ENCODE measurements at regions of chrX and their contacts with region 1.

Region 1: DNA sequence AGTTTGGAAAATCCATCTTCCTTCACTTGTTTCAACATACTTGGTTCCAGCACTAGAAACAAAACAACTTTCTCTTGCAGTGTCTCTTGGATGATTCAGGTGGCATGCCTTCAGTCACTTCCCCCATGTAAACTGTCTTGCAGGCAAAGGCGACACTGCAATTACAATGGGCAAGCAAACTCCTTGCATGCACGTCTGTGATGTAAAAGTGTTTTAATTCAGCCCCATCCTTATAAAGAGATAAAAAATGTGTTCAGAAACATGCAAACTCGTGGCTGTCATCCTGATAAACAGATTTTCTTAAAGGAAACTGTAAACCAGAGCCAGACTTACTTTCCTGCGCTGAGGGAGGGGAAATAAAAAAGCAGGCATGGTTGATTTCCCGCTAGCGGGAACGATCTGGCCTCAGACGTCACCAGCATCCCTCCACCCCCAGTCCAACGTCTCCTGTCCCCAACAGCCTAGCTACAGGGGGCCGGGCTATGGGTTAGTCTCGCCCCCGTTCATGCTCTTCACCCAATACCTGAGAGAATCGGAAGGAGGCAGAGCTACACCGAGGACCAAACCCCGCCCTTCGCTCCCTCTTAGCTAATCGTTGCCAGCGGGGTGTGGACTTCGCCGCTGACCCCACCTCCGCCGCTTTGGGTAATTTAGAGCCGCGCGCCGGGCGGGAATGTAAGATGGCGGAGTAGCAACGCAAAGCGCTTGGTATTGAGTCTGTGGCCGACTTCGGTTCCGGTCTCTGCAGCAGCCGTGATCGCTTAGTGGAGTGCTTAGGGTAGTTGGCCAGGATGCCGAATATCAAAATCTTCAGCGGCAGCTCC is at the start of gene PRPS1:
- DNase-seq: peak; percentile 62 to 91 (median 86)
- ATAC-seq: peak; percentile 98
- H3K4me3 ChIP-seq: peak within 1 kb of the TSS; percentile 97
- H3K4me3 Mint-ChIP-seq: peak within 1 kb of the TSS; percentile 79 to 97 (median 94)
- H3K27ac ChIP-seq: peak within 1 kb of the TSS; percentile 86
- H3K27ac Mint-ChIP-seq: peak within 1 kb of the TSS; percentile 87 to 97 (median 92)
- H3K4me1 ChIP-seq: peaks cover 11 to 12% of the 10 kb centered on the region in 2 donors
- H3K4me1 Mint-ChIP-seq: peaks cover 2 to 40% (median 32%) of the 10 kb centered on the region in 7 donors
- H3K27me3 ChIP-seq: no peaks in the 10 kb centered on the region
- H3K27me3 Mint-ChIP-seq: no peaks in the 10 kb centered on the region
- total RNA-seq, gene PRPS1: 59.2 to 71.8 (median 62.6) TPM

Region 2: DNA sequence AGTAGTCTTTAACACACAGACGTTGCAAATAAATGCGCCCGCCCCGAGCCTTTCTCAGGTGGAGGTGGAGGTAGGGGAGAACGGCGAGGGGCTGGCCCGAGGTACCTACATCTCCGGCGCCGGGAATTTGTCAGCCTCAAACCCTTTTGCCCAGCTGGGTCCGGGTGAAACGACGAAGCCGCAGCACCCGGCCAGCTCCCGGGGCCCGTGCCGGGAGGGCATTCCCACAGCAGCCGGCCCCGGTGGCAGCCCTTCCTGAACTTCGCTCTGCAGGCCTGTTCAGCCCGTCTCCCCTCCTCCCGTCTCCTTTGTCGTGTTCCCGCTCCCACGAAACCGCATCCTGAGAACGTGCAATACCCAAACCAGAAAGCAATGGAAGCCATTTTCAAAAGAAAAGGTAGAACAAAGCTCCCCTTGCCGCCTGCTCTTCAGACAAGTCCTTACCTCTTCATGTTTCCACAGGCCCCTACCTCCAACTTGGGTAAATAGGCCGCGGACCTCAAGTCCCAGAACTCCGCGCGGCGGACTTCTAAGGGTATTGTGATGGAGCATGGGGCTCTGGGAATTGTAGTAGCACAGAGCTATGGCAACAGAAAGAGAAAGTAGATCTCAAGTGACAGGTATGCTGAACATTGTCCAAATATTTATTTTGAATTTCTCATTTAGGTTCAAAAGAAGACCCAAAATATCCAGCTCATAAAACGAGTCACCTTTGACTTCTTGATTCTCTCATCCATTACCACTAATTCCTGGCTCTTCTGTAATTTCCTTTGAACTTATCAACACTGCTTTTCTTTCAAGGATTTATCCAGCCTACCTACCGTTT is 509.5 kb before region 1 on chrX and contains the start of gene RBM41:
- CTCF ChIA-PET with region 1: no interaction called
- POLR2A ChIA-PET with region 1: no interaction called
- intact Hi-C with region 1: loop called (anchors 1 kb)
- DNase-seq: peak; percentile 41 to 84 (median 73)
- ATAC-seq: peak; percentile 100
- H3K4me3 ChIP-seq: peak within 1 kb of the TSS; percentile 60
- H3K4me3 Mint-ChIP-seq: peak within 1 kb of the TSS; percentile 90 to 100 (median 99)
- H3K27ac ChIP-seq: peak within 1 kb of the TSS; percentile 80
- H3K27ac Mint-ChIP-seq: peak within 1 kb of the TSS; percentile 89 to 99 (median 97)
- H3K4me1 ChIP-seq: peaks cover 0 to 13% of the 10 kb centered on the region in 2 donors
- H3K4me1 Mint-ChIP-seq: peaks cover 21 to 51% (median 36%) of the 10 kb centered on the region in 7 donors
- H3K27me3 ChIP-seq: no peaks in the 10 kb centered on the region
- H3K27me3 Mint-ChIP-seq: no peaks in the 10 kb centered on the region
- total RNA-seq, gene RBM41: 11.5 to 31.3 (median 16.6) TPM

Region 3: GRCh38 chrX:107646735-107647134 is 18.7 kb after region 1 on chrX:
- CTCF ChIA-PET with region 1: no interaction called
- POLR2A ChIA-PET with region 1: interaction called, 4 read pairs
- intact Hi-C with region 1: loop called in 1 of 2 experiments (anchors 2 kb)
- DNase-seq: no peak
- ATAC-seq: no peak
- H3K4me3 ChIP-seq: no peak overlapping the region
- H3K4me3 Mint-ChIP-seq: no peak overlapping the region
- H3K27ac ChIP-seq: no peak overlapping the region
- H3K27ac Mint-ChIP-seq: no peak overlapping the region
- H3K4me1 ChIP-seq: no peaks in the 10 kb centered on the region
- H3K4me1 Mint-ChIP-seq: peaks cover 0 to 7% (median 2%) of the 10 kb centered on the region in 7 donors
- H3K27me3 ChIP-seq: no peaks in the 10 kb centered on the region
- H3K27me3 Mint-ChIP-seq: no peaks in the 10 kb centered on the region

Region 4: GRCh38 chrX:107716816-107717700 is 89.0 kb after region 1 on chrX:
- CTCF ChIA-PET with region 1: interaction called, 3 read pairs
- POLR2A ChIA-PET with region 1: interaction called, 13 read pairs
- intact Hi-C with region 1: loop called (anchors 1 kb)
- DNase-seq: peak; percentile 77 to 96 (median 91)
- ATAC-seq: peak; percentile 68
- H3K4me3 ChIP-seq: peak overlapping the region; percentile 97
- H3K4me3 Mint-ChIP-seq: peak overlapping the region; percentile 87 to 96 (median 92)
- H3K27ac ChIP-seq: peak overlapping the region; percentile 100
- H3K27ac Mint-ChIP-seq: peak overlapping the region; percentile 94 to 100 (median 98)
- H3K4me1 ChIP-seq: peaks cover 33 to 41% of the 10 kb centered on the region in 2 donors
- H3K4me1 Mint-ChIP-seq: peaks cover 12 to 71% (median 54%) of the 10 kb centered on the region in 7 donors
- H3K27me3 ChIP-seq: no peaks in the 10 kb centered on the region
- H3K27me3 Mint-ChIP-seq: no peaks in the 10 kb centered on the region

Region 5: DNA sequence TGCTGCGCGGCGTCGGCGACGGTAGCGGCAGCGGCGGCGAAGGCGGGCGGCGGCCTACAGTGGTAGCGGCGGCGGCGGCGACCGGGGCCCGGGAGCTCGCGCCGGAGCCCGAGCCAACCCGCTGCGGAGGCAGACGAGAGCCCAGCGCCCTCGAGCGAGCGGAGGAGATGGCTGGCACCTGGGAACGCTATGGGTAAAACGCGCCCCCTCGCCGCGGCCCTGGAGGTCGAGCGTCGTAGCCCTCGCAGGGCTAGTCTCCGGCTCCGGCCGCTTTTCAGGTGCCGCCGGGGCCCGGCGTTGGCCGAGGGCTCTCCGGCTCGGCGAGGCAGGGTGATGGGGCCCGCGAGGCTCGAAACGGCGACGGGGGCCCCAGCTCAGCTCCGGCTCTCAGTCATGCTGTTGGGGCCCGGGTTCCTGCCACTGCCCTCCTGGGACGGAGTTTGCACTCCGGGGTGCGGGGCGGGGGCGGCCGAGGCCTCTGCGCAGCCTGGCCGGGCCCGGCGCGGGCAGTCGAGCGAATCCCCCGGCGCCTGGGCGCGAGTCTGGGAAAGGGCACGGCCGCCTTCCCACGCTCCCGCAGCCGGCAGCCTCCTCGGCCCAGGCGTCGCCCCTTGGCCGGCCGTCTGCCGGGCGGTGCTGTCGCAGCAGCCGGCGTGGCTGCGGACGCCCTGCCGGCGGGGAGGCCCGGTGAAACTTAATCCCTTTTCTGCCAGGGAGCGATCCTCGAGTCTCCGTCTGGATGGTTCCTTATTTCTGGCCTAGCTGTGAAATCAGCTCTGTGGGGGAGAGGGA is 198.4 kb after region 1 on chrX:
- CTCF ChIA-PET with region 1: no interaction called
- POLR2A ChIA-PET with region 1: interaction called, 7 read pairs
- intact Hi-C with region 1: loop called (anchors 1 kb)
- DNase-seq: peak in 8 of 9 donors; percentile 9 to 53 (median 46)
- ATAC-seq: peak; percentile 77
- H3K4me3 ChIP-seq: peak overlapping the region; percentile 57
- H3K4me3 Mint-ChIP-seq: peak overlapping the region; percentile 78 to 92 (median 89)
- H3K27ac ChIP-seq: peak overlapping the region; percentile 80
- H3K27ac Mint-ChIP-seq: peak overlapping the region; percentile 44 to 95 (median 92)
- H3K4me1 ChIP-seq: peaks cover 0 to 7% of the 10 kb centered on the region in 2 donors
- H3K4me1 Mint-ChIP-seq: peaks cover 11 to 65% (median 43%) of the 10 kb centered on the region in 7 donors
- H3K27me3 ChIP-seq: no peaks in the 10 kb centered on the region
- H3K27me3 Mint-ChIP-seq: peaks cover 0 to 20% (median 0%) of the 10 kb centered on the region in 5 donors

Region 6: DNA sequence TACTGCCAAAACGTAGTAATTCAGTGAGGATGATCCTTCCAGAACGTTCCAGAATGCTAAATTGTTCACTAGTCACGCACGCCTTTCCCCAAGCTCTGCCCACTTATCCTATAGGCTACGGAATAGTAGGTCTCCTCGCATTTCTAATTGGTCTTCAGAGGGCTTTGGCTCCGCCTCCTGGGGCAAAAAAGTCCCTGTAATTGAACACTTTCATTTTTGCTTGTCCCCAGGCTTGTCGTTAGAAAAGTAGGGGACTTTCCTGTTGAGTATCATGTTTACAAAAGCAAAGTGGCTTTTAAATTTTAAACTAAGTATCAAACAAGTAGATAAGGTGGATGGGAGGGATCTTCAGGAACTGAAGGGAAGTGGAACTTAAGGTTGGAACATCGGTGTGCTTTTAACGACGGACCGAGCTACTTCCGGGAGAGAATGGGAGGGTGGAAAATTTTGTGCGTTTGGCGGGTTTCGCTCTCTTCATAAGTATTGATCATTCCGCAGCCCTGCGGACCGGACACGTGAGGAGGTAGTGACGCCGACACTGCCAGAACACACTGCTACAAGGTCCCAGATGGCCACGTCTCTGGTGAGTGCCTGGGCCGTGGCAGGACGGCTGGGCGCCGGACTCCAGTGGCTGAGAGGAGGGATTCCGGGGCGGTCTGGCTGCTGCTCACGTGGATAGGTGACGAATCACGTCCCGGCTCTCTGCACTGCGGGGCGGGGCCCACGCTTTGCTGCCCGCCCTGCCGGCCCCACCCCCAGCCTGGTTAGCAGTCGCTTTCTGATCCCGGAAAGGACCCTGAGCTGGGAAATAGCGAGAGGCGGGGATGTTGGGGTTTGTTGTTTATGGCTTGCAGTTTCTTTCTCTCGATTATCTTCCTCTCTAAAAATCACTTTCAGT is 1908.6 kb after region 1 on chrX and contains the start of gene NXT2:
- CTCF ChIA-PET with region 1: no interaction called
- POLR2A ChIA-PET with region 1: no interaction called
- intact Hi-C with region 1: loop called in 1 of 2 experiments (anchors 5 kb)
- DNase-seq: peak; percentile 64 to 89 (median 83)
- ATAC-seq: peak; percentile 100
- H3K4me3 ChIP-seq: peak within 1 kb of the TSS; percentile 87
- H3K4me3 Mint-ChIP-seq: peak within 1 kb of the TSS; percentile 79 to 98 (median 95)
- H3K27ac ChIP-seq: peak within 1 kb of the TSS; percentile 87
- H3K27ac Mint-ChIP-seq: peak within 1 kb of the TSS; percentile 92 to 99 (median 98)
- H3K4me1 ChIP-seq: peaks cover 0 to 3% of the 10 kb centered on the region in 2 donors
- H3K4me1 Mint-ChIP-seq: peaks cover 0 to 14% (median 8%) of the 10 kb centered on the region in 7 donors
- H3K27me3 ChIP-seq: no peaks in the 10 kb centered on the region
- H3K27me3 Mint-ChIP-seq: peaks cover 0 to 19% (median 12%) of the 10 kb centered on the region in 5 donors
- total RNA-seq, gene NXT2: 5.7 to 13.5 (median 7.7) TPM